ENCODE measurements at regions of chr7 and their contacts with region 1.

Region 1: GRCh38 chr7:138008547-138009349 is 6.9 kb upstream of the CREB3L2 start:
- DNase-seq: peak; percentile 55 to 84 (median 66)
- ATAC-seq: peak; percentile 76
- H3K4me3 ChIP-seq: no peak overlapping the region
- H3K27ac ChIP-seq: 0 out of 3 replicates have a peak overlapping the region, but pooled peaks have one; percentile 24
- H3K4me1 ChIP-seq: peaks cover 0 to 3% of the 10 kb centered on the region in 2 experiments; a peak in 2 of 5 replicates
- H3K27me3 ChIP-seq: no peaks in the 10 kb centered on the region
- CTCF ChIP-seq: peak; percentile 88 to 98 (median 91)
- EP300 ChIP-seq: no peak
- POLR2A ChIP-seq: no peak
- RAD21 ChIP-seq: peak; percentile 99 to 100

Region 2: DNA sequence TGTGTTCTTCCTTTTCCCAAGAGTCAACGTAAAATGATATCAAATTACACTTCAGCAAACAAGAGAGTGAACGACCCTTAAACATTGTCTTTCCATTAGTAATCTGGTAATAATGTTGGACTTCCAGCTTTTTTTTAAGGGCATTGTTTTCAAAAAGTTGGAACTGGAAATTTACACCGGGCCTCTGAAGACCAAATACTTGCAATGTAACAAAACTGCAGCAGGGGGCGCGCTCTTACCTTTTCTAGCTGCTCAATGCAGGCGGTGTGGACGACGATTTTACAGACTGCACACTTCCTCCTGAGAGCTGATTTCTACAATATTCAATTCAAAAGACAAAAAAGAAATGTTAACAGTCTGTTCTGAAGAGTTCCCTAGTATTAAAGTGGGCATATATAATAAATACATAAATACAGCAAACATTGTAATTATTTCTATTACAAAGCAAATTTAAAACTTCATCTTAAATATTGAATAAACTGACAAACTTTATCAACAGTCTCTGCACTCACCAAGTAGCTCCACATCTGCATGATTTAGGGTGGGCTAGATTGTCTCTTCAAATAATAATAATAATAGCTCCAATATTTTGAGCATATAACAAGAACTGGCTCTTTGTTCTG is 352.4 kb before region 1 on chr7:
- CTCF ChIA-PET with region 1: interaction called, 9 read pairs
- POLR2A ChIA-PET with region 1: no interaction called
- in situ Hi-C with region 1: loop called (anchors 5 kb)
- intact Hi-C with region 1: loop called (anchors 1 kb)
- DNase-seq: peak; percentile 69 to 84 (median 74)
- ATAC-seq: peak; percentile 96
- H3K4me3 ChIP-seq: no peak overlapping the region
- H3K27ac ChIP-seq: no peak overlapping the region
- H3K4me1 ChIP-seq: no peaks in the 10 kb centered on the region
- H3K27me3 ChIP-seq: peaks cover 6 to 20% of the 10 kb centered on the region in 2 experiments; a peak in 4 of 5 replicates
- CTCF ChIP-seq: peak; percentile 88 to 96 (median 89)
- EP300 ChIP-seq: peak; percentile 10; the same call in 1 of the 2 replicates
- POLR2A ChIP-seq: no peak
- RAD21 ChIP-seq: peak; percentile 91 to 93

Region 3: DNA sequence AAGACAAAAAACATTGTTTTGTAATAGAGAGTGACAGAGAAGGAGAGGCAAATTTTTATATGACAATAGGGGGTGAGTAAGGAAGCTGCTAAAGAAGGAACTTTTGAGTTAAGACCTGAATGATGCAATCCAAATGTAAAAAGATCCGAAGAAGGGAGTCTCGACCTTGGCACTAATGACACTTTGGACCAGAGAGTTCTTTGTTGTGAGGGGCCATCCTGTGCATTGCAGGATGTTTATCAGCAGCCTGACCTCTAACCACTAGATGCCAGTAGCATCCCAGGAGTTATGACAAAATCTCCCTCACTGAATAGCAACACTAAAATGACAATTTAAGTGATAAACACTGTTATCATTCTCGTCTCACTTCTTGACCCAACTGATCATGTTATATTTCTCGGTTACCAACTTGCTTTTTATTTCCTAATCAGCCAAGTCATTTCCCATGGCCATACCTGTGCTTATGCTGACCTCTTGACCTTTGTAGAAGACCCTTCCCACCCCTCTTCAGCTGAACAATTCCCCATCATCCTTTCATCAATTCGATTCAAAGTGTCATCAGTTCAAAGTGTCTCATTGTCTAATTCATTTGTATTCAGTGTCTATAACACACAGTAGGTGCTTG is 191.9 kb before region 1 on chr7:
- CTCF ChIA-PET with region 1: no interaction called
- POLR2A ChIA-PET with region 1: no interaction called
- in situ Hi-C with region 1: no loop called
- intact Hi-C with region 1: loop called (anchors 1 kb)
- DNase-seq: peak in 1 of 4 experiments; percentile 25
- ATAC-seq: peak; percentile 74
- H3K4me3 ChIP-seq: no peak overlapping the region
- H3K27ac ChIP-seq: no peak overlapping the region
- H3K4me1 ChIP-seq: no peaks in the 10 kb centered on the region
- H3K27me3 ChIP-seq: peaks cover 6 to 21% of the 10 kb centered on the region in 2 experiments
- CTCF ChIP-seq: peak; percentile 38 to 63 (median 47); a peak in 4 of 6 replicates
- EP300 ChIP-seq: no peak
- POLR2A ChIP-seq: no peak
- RAD21 ChIP-seq: peak; percentile 47 to 81